Endothelial cell of umbilical vein (primary cell): ENCODE measurements at regions of chr5 and their contacts with region 1.

Region 1: GRCh38 chr5:140372971-140373487 is 13.0 kb downstream of the SLC4A9 start:
- DNase-seq: peak; percentile 88
- H3K4me3 ChIP-seq: no peak overlapping the region
- H3K27ac ChIP-seq: no peak overlapping the region
- H3K4me1 ChIP-seq: peaks cover 13% of the 10 kb centered on the region
- H3K27me3 ChIP-seq: no peaks in the 10 kb centered on the region
- CTCF ChIP-seq: peak; percentile 80 to 88
- POLR2A ChIP-seq: no peak

Region 2: DNA sequence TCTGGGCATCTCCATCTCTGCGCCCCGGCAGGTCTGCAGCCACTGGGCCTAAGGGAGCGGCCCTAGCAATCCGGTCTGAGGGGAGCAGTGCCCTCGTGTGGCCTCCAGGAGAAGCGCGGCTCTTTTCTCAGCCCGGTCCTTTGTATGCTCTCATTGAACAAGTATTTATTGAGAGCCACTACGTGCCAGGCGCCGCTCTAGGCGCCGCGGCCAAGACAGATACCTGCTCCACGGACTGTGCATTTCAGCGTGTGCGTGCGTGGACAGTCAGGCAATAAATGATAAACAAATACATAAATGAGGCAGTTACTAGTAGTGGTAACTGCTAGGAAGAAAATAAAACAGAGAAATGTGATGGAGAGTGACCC is 15.3 kb before region 1 on chr5:
- CTCF ChIA-PET with region 1: interaction called, 47 read pairs
- POLR2A ChIA-PET with region 1: no interaction called
- dilution Hi-C with region 1: no loop called
- intact Hi-C with region 1: no loop called
- DNase-seq: peak; percentile 88
- H3K4me3 ChIP-seq: no peak overlapping the region
- H3K27ac ChIP-seq: no peak overlapping the region
- H3K4me1 ChIP-seq: no peaks in the 10 kb centered on the region
- H3K27me3 ChIP-seq: no peaks in the 10 kb centered on the region
- CTCF ChIP-seq: peak; percentile 94 to 97
- POLR2A ChIP-seq: no peak

Region 3: GRCh38 chr5:140401362-140402257 is 28.6 kb after region 1 on chr5 and contains the start of gene ANKHD1:
- CTCF ChIA-PET with region 1: interaction called, 22 read pairs
- POLR2A ChIA-PET with region 1: no interaction called
- dilution Hi-C with region 1: no loop called
- intact Hi-C with region 1: loop called (anchors 2 kb)
- DNase-seq: peak; percentile 100
- H3K4me3 ChIP-seq: peak within 1 kb of the TSS; percentile 42 to 92 (median 87)
- H3K27ac ChIP-seq: peak within 1 kb of the TSS; percentile 44
- H3K4me1 ChIP-seq: peaks cover 8% of the 10 kb centered on the region
- H3K27me3 ChIP-seq: no peaks in the 10 kb centered on the region
- CTCF ChIP-seq: no peak
- POLR2A ChIP-seq: peak; percentile 67
- total RNA-seq, gene ANKHD1: 87.0 and 92.4 TPM in 2 replicates

Region 4: GRCh38 chr5:140632150-140633020 is 259.4 kb after region 1 on chr5:
- CTCF ChIA-PET with region 1: interaction called, 27 read pairs
- POLR2A ChIA-PET with region 1: no interaction called
- dilution Hi-C with region 1: no loop called
- intact Hi-C with region 1: loop called (anchors 1 kb)
- DNase-seq: peak; percentile 67
- H3K4me3 ChIP-seq: peak overlapping the region; percentile 28 to 57 (median 47)
- H3K27ac ChIP-seq: no peak overlapping the region
- H3K4me1 ChIP-seq: peaks cover 15% of the 10 kb centered on the region
- H3K27me3 ChIP-seq: peaks cover 0 to 3% of the 10 kb centered on the region in 2 experiments
- CTCF ChIP-seq: no peak
- POLR2A ChIP-seq: no peak

Region 5: GRCh38 chr5:140647042-140647341 is 274.0 kb after region 1 on chr5:
- CTCF ChIA-PET with region 1: interaction called, 13 read pairs
- POLR2A ChIA-PET with region 1: no interaction called
- dilution Hi-C with region 1: no loop called
- intact Hi-C with region 1: no loop called
- DNase-seq: peak; percentile 10
- H3K4me3 ChIP-seq: peak overlapping the region; percentile 65 to 90 (median 76)
- H3K27ac ChIP-seq: peak overlapping the region; percentile 21
- H3K4me1 ChIP-seq: peaks cover 13% of the 10 kb centered on the region
- H3K27me3 ChIP-seq: no peaks in the 10 kb centered on the region
- CTCF ChIP-seq: no peak
- POLR2A ChIP-seq: no peak

Region 6: DNA sequence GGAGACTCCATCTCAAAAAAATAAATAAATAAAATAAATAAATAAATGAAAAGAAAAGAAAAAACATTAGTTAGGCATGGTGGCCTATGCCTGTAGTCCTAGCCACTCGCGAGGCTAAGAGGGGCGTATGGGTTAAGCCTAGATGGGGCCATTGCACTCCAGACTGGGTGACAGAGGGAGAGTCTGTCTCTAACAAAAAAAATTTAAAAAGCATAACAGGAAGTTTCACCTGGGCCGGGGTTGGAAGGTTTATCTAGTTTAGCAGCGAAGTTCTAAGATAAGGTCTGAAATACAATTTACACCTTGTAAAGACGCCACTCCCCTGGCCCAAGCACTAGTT is 345.2 kb after region 1 on chr5:
- CTCF ChIA-PET with region 1: interaction called, 16 read pairs
- POLR2A ChIA-PET with region 1: no interaction called
- dilution Hi-C with region 1: no loop called
- intact Hi-C with region 1: no loop called
- DNase-seq: no peak
- H3K4me3 ChIP-seq: no peak overlapping the region
- H3K27ac ChIP-seq: peak overlapping the region; percentile 60
- H3K4me1 ChIP-seq: peaks cover 6% of the 10 kb centered on the region
- H3K27me3 ChIP-seq: peaks cover 0 to 2% of the 10 kb centered on the region in 2 experiments
- CTCF ChIP-seq: no peak
- POLR2A ChIP-seq: no peak

Region 7: GRCh38 chr5:141272906-141273305 is 899.9 kb after region 1 on chr5:
- CTCF ChIA-PET with region 1: no interaction called
- POLR2A ChIA-PET with region 1: no interaction called
- dilution Hi-C with region 1: no loop called
- intact Hi-C with region 1: no loop called
- DNase-seq: no peak
- H3K4me3 ChIP-seq: no peak overlapping the region
- H3K27ac ChIP-seq: no peak overlapping the region
- H3K4me1 ChIP-seq: no peaks in the 10 kb centered on the region
- H3K27me3 ChIP-seq: no peaks in the 10 kb centered on the region
- CTCF ChIP-seq: no peak
- POLR2A ChIP-seq: no peak